Spleen (tissue), 13 donors: ENCODE measurements at regions of chr3 and their contacts with region 1.

Region 1: GRCh38 chr3:151146071-151146730 is 56.8 kb downstream of the GPR171 start:
- DNase-seq: peak; percentile 87
- H3K4me3 ChIP-seq: peak overlapping the region in 1 of 8 donors; percentile 43
- H3K27ac ChIP-seq: no peak overlapping the region
- H3K4me1 ChIP-seq: peaks cover 0 to 15% (median 9%) of the 10 kb centered on the region in 6 donors
- H3K27me3 ChIP-seq: peaks cover 0 to 5% (median 0%) of the 10 kb centered on the region in 7 donors
- CTCF ChIP-seq: peak; percentile 60 to 90 (median 82)
- POLR2A ChIP-seq: no peak

Region 2: DNA sequence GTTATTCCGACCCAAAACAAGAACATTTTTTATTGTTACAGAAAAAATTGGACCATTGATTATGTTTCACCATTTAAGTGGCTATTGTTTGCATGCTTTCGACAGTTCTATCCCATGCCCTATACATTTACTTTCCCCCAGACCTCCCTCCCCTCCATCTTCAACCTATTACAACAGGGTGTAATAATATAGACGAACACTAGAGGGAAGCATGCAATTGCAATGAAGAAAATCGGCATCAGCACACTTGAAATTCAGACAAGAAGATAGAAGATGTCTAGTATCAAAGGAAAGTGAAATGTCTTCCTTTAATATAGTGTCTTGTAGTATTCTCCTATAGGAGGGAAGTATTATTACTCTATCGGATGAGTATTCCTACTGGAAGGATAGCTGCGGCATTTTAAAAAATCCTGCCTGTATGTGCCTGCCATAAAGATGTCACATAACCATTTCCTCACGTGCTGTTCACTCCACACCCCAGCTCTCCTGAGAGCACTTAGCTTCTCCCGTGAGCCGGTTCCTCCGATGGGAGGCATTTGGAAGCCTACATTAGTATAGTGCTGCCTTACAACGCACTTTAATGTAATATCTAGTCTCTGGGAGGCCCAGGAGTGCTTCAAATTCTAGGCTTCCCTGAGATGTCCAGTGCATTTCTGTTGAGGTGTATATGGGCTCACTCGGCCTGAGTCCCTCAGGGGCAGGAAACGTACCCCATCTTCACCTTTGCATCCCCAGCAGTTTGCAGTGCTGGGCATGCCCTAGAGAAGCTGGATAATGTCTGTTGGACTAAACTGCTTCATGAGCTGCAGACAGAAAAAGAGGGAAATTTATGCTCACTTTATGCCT is 424.7 kb before region 1 on chr3:
- intact Hi-C with region 1: loop called (anchors 10 kb)
- DNase-seq: no peak
- H3K4me3 ChIP-seq: no peak overlapping the region
- H3K27ac ChIP-seq: no peak overlapping the region
- H3K4me1 ChIP-seq: peaks cover 0 to 9% (median 6%) of the 10 kb centered on the region in 6 donors
- H3K27me3 ChIP-seq: no peaks in the 10 kb centered on the region
- CTCF ChIP-seq: peak; percentile 57 to 93 (median 83)
- POLR2A ChIP-seq: no peak

Region 3: DNA sequence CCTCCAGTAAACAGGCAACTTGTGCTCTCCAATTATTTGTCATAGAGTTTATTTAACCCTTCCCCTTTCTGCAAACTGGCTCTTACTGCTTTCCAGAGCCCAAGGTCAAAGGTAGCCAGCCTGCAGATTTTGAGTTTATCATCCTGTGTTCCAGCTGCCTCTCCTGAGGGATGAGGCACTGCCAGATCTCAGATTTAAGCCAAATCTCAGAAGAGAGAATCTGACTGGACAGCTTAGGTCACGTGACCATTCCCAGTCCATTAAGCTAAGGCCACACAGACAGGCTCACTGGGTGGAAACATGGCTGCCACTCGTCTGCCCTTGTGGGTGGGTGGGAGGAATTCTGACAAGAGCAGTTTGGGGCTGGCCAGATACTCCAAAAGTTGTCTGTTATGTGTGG is 374.6 kb before region 1 on chr3:
- intact Hi-C with region 1: no loop called
- DNase-seq: no peak
- H3K4me3 ChIP-seq: no peak overlapping the region
- H3K27ac ChIP-seq: no peak overlapping the region
- H3K4me1 ChIP-seq: peaks cover 0 to 4% (median 0%) of the 10 kb centered on the region in 6 donors
- H3K27me3 ChIP-seq: no peaks in the 10 kb centered on the region
- CTCF ChIP-seq: no peak
- POLR2A ChIP-seq: no peak

Region 4: DNA sequence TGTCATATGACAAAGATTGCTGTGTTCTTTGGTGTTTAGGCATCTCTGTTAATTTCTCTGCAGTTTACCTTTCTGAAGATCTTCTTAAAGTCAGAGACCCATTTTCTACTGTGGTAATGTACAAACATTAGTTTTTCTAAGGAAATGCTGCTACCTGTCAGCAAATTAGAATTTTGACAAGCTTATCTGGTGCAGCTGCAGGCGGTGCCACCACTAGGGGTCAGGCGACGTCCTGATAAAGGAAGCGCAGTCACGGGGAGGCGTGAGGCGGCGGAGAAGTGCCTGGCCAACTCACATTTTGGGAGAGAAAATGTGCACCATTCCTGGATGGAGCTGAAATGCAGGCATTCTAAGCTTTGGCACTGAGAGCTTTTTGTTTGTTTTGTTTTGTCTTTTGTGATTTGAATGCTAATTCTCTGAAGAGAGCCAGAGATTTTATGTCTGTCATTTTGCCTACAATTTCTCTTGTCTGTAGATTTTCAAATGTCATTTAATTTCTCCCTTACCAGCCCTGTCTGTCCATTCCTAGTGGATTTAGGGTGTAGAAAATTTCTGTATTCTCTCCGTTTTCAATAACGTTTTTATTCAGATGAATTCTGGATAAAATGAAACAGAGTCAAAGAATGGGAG is 358.3 kb before region 1 on chr3:
- intact Hi-C with region 1: loop called (anchors 10 kb)
- DNase-seq: peak; percentile 96
- H3K4me3 ChIP-seq: no peak overlapping the region
- H3K27ac ChIP-seq: no peak overlapping the region
- H3K4me1 ChIP-seq: peaks cover 0 to 7% (median 0%) of the 10 kb centered on the region in 6 donors
- H3K27me3 ChIP-seq: peaks cover 0 to 7% (median 0%) of the 10 kb centered on the region in 7 donors
- CTCF ChIP-seq: peak; percentile 58 to 92 (median 88)
- POLR2A ChIP-seq: no peak

Region 5: DNA sequence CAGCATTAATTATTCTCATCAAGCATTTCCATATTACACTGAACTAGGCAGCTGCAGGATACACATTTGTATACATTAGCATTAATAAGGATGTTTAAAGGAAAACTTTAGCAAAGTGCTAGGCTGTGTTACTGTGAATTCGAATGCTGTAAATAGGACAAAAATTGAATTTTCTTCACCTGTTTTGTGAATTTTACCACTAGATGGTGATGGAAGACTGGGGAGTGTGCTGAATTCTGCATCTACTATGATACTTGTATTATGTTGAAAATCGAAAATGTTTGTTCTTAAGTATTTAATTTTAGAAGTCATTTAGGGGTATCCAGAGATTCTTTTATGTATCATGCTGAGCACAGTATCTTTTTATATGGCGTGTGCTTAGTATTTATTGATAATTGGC is 144.5 kb after region 1 on chr3:
- intact Hi-C with region 1: no loop called
- DNase-seq: no peak
- H3K4me3 ChIP-seq: no peak overlapping the region
- H3K27ac ChIP-seq: no peak overlapping the region
- H3K4me1 ChIP-seq: no peaks in the 10 kb centered on the region
- H3K27me3 ChIP-seq: no peaks in the 10 kb centered on the region
- CTCF ChIP-seq: peak in 2 of 11 experiments; percentile 11 to 22
- POLR2A ChIP-seq: no peak